ENCODE measurements at regions of chr2 and their contacts with region 1.

Region 1: GRCh38 chr2:16727256-16727655 is 61.6 kb upstream of the CYRIA start:
- DNase-seq: peak in 1 of 2 donors; percentile 46
- ATAC-seq: peak; percentile 56
- H3K4me3 ChIP-seq: no peak overlapping the region
- H3K27ac ChIP-seq: no peak overlapping the region
- H3K4me1 ChIP-seq: peaks cover 0 to 2% of the 10 kb centered on the region in 2 donors
- H3K27me3 ChIP-seq: no peaks in the 10 kb centered on the region

Region 2: GRCh38 chr2:16665748-16666448 is 61.4 kb before region 1 on chr2 and contains the start of gene CYRIA:
- intact Hi-C with region 1: loop called (anchors 5 kb)
- DNase-seq: peak; percentile 77 to 87
- ATAC-seq: peak; percentile 78
- H3K4me3 ChIP-seq: peak within 1 kb of the TSS; percentile 49 to 71
- H3K27ac ChIP-seq: no peak within 1 kb of the TSS
- H3K4me1 ChIP-seq: no peaks in the 10 kb centered on the region
- H3K27me3 ChIP-seq: no peaks in the 10 kb centered on the region
- total RNA-seq, gene CYRIA: 12.8 to 24.9 TPM